ENCODE measurements at regions of chr7 and their contacts with region 1.

Region 1: DNA sequence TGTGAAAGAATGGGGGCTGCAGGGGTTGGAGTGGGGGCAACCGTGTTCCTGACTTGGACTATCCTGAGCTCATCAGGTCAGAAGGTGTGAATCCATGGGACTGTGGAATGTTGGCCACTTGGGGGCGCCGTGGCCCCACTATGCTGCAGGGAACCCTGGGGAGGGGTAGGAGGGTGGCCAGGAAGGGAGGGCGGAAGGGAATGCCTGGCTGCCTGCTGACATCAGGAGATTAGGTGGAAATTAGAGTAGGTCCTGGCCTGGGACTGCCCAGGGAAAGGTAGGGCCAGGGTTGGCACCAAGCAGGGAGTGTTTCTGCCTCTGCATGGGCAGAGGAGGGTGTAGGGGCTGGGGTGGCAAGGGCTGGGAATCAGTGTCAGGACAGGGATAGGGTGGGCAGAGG is 65.8 kb upstream of the PRSS58 start:
- DNase-seq: peak in 5 of 9 donors; percentile 25 to 44 (median 41)
- ATAC-seq: peak; percentile 40
- H3K4me3 ChIP-seq: no peak overlapping the region
- H3K4me3 Mint-ChIP-seq: peak overlapping the region in 7 of 10 donors; percentile 4 to 65 (median 54)
- H3K27ac ChIP-seq: peak overlapping the region; percentile 34
- H3K27ac Mint-ChIP-seq: peak overlapping the region; percentile 17 to 96 (median 80)
- H3K4me1 ChIP-seq: peaks cover 0 to 24% of the 10 kb centered on the region in 2 donors
- H3K4me1 Mint-ChIP-seq: peaks cover 5 to 51% (median 34%) of the 10 kb centered on the region in 7 donors
- H3K27me3 ChIP-seq: no peaks in the 10 kb centered on the region
- H3K27me3 Mint-ChIP-seq: peaks cover 0 to 23% (median 4%) of the 10 kb centered on the region in 5 donors

Region 2: DNA sequence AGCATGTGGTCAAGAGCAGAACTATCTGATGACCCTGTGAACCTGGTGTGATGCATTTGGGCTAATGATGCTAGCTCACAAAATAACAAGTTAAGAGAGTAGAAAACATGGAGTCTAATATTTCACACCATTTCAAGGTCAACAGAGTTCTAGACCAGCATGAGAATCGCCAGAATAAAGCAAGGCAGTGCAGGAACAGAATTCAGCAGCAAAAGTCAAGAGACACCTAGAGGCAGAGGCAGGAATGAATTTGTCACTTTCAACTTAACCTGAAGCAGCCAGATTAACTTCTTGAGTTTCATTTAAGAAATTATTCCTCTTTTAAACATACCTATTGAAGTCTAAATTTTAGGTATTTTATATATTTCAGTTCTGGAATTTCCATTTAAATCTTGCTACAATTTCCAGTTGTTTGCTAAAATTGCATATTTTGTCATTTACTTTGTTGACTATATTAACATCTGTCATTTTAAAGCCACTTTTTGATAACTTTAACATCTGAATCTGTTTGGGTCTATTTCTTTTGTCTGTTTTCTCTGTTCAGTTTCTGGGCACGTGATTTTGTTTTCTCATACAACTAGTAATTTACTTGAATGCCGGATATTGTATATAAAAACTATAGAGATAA is 21.7 kb before region 1 on chr7:
- CTCF ChIA-PET with region 1: interaction called, 32 read pairs
- POLR2A ChIA-PET with region 1: interaction called, 13 read pairs
- intact Hi-C with region 1: loop called in 1 of 2 experiments (anchors 1 kb)
- DNase-seq: peak in 1 of 9 donors; percentile 34
- ATAC-seq: no peak
- H3K4me3 ChIP-seq: no peak overlapping the region
- H3K4me3 Mint-ChIP-seq: peak overlapping the region in 2 of 10 donors; percentile 17 to 49
- H3K27ac ChIP-seq: no peak overlapping the region
- H3K27ac Mint-ChIP-seq: no peak overlapping the region
- H3K4me1 ChIP-seq: peaks cover 0 to 28% of the 10 kb centered on the region in 2 donors
- H3K4me1 Mint-ChIP-seq: peaks cover 7 to 52% (median 35%) of the 10 kb centered on the region in 7 donors
- H3K27me3 ChIP-seq: no peaks in the 10 kb centered on the region
- H3K27me3 Mint-ChIP-seq: peaks cover 4 to 25% (median 16%) of the 10 kb centered on the region in 5 donors

Region 3: GRCh38 chr7:142357953-142358520 is 34.3 kb after region 1 on chr7:
- CTCF ChIA-PET with region 1: interaction called, 5 read pairs
- POLR2A ChIA-PET with region 1: no interaction called
- intact Hi-C with region 1: loop called (anchors 1 to 2 kb)
- DNase-seq: peak in 8 of 9 donors; percentile 29 to 56 (median 44)
- ATAC-seq: peak; percentile 71
- H3K4me3 ChIP-seq: no peak overlapping the region
- H3K4me3 Mint-ChIP-seq: peak overlapping the region in 2 of 10 donors; percentile 21 to 26
- H3K27ac ChIP-seq: no peak overlapping the region
- H3K27ac Mint-ChIP-seq: peak overlapping the region in 5 of 9 donors; percentile 10 to 68 (median 35)
- H3K4me1 ChIP-seq: peaks cover 0 to 30% of the 10 kb centered on the region in 2 donors
- H3K4me1 Mint-ChIP-seq: peaks cover 13 to 58% (median 47%) of the 10 kb centered on the region in 7 donors
- H3K27me3 ChIP-seq: no peaks in the 10 kb centered on the region
- H3K27me3 Mint-ChIP-seq: peaks cover 0 to 39% (median 0%) of the 10 kb centered on the region in 5 donors

Region 4: DNA sequence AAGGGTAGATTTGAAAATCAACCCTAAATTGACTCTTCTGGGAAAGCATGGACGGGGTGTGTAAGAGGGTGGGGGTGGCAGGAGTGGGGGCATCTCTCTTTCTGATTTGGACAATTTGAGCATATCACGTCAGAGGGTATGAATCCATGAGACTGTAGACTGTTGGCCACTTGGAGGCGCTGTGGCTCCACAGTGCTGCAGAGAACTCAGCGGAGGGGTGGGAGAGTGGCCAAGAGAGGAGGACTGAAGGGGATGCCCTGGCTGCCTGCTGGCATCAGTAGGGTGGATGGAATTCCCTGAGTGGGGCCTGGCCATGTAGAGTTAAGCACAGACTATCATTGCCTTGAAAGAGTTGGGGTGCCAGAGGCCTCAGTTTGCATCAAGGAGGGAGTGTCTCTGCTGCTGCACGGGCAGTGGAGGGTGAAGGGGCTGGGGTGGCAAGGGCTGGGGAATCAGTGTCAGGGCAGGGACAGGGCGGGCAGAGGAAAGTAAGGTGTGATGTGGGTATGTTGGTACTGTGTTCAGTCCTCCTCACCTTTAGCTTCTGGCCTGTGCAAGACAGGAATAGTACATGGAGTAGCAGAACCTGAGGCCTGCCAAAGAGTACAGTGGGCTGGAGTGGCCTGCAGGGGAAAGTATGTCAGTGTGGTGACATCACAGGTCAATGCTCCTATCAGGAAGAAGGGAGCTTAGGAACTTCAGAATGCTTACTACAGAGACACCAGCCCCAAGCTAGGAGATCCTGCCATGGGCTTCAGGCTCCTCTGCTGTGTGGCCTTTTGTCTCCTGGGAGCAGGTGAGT is 67.7 kb after region 1 on chr7:
- CTCF ChIA-PET with region 1: no interaction called
- POLR2A ChIA-PET with region 1: no interaction called
- intact Hi-C with region 1: no loop called
- DNase-seq: peak in 5 of 9 donors; percentile 22 to 37 (median 35)
- ATAC-seq: peak; percentile 63
- H3K4me3 ChIP-seq: no peak overlapping the region
- H3K4me3 Mint-ChIP-seq: peak overlapping the region; percentile 21 to 85 (median 54)
- H3K27ac ChIP-seq: peak overlapping the region; percentile 35
- H3K27ac Mint-ChIP-seq: peak overlapping the region in 8 of 9 donors; percentile 12 to 86 (median 58)
- H3K4me1 ChIP-seq: no peaks in the 10 kb centered on the region
- H3K4me1 Mint-ChIP-seq: peaks cover 0 to 6% (median 4%) of the 10 kb centered on the region in 7 donors
- H3K27me3 ChIP-seq: no peaks in the 10 kb centered on the region
- H3K27me3 Mint-ChIP-seq: peaks cover 0 to 6% (median 0%) of the 10 kb centered on the region in 5 donors

Region 5: DNA sequence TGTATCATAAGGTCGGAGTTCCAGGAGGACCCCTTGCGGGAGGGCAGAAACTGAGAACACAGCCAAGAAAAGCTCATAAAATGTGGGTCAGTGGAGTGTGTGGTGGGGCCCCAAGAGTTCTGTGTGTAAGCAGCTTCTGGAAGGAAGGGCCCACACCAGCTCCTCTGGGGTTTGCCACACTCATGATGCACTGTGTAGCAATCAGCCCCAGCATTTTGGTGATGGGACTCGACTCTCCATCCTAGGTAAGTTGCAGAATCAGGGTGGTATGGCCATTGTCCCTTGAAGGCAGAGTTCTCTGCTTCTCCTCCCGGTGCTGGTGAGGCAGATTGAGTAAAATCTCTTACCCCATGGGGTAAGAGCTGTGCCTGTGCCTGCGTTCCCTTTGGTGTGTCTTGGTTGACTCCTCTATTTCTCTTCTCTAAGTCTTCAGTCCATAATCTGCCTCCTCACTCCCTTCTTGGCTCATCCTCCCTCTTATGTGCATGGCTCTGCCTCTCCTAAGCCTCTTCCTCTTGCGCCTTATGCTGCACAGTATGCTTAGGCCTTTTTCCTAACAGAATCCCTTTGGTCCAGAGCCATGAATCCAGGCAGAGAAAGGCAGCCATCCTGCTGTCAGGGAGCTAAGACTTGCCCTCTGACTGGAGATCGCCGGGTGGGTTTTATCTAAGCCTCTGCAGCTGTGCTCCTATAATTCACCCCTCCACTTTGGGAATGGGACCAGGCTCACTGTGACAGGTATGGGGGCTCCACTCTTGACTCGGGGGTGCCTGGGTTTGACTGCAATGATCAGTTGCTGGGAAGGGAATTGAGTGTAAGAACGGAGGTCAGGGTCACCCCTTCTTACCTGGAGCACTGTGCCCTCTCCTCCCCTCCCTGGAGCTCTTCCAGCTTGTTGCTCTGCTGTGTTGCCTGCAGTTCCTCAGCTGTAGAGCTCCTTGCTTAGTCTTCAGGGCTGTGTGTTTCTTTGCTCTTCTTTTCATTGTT is 464.9 kb after region 1 on chr7:
- CTCF ChIA-PET with region 1: interaction called, 3 read pairs
- POLR2A ChIA-PET with region 1: interaction called, 29 read pairs
- intact Hi-C with region 1: no loop called
- DNase-seq: peak in 5 of 9 donors; percentile 7 to 33 (median 18)
- ATAC-seq: no peak
- H3K4me3 ChIP-seq: peak overlapping the region; percentile 96
- H3K4me3 Mint-ChIP-seq: peak overlapping the region; percentile 91 to 100 (median 98)
- H3K27ac ChIP-seq: peak overlapping the region; percentile 98
- H3K27ac Mint-ChIP-seq: peak overlapping the region; percentile 95 to 100 (median 99)
- H3K4me1 ChIP-seq: peaks cover 14 to 19% of the 10 kb centered on the region in 2 donors
- H3K4me1 Mint-ChIP-seq: peaks cover 13 to 28% (median 21%) of the 10 kb centered on the region in 7 donors
- H3K27me3 ChIP-seq: no peaks in the 10 kb centered on the region
- H3K27me3 Mint-ChIP-seq: peaks cover 0 to 3% (median 0%) of the 10 kb centered on the region in 5 donors

Region 6: GRCh38 chr7:143214789-143215679 is 891.3 kb after region 1 on chr7:
- CTCF ChIA-PET with region 1: interaction called, 4 read pairs
- POLR2A ChIA-PET with region 1: no interaction called
- intact Hi-C with region 1: loop called (anchors 2 to 10 kb)
- DNase-seq: peak; percentile 26 to 81 (median 75)
- ATAC-seq: peak; percentile 99
- H3K4me3 ChIP-seq: no peak overlapping the region
- H3K4me3 Mint-ChIP-seq: no peak overlapping the region
- H3K27ac ChIP-seq: no peak overlapping the region
- H3K27ac Mint-ChIP-seq: peak overlapping the region in 1 of 9 donors; percentile 13
- H3K4me1 ChIP-seq: no peaks in the 10 kb centered on the region
- H3K4me1 Mint-ChIP-seq: no peaks in the 10 kb centered on the region
- H3K27me3 ChIP-seq: no peaks in the 10 kb centered on the region
- H3K27me3 Mint-ChIP-seq: peaks cover 0 to 21% (median 4%) of the 10 kb centered on the region in 5 donors